ENCODE measurements at regions of chr17 and their contacts with region 1.

Region 1: DNA sequence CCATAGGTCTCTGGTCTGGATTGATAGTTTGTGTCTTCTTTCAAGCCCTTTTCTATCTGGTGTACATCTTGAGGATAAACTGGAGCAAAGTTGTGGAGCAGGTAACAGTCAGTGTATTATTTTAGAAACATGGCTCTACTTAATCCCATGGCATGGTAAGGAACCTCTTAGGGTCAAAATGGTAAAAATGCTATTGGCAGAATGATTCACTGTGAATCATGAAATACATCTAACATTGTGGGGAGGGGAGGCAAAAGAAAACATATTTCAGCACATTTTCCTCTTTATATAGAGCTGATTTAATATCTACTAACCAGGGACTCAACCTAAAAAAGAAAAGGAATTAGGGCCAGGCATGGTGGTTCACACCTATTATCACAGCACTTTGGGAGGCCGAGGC is 17.9 kb upstream of the ALDH3A2 start:
- DNase-seq: no peak
- H3K4me3 ChIP-seq: no peak overlapping the region
- H3K27ac ChIP-seq: no peak overlapping the region
- H3K4me1 ChIP-seq: no peaks in the 10 kb centered on the region
- H3K27me3 ChIP-seq: no peaks in the 10 kb centered on the region
- CTCF ChIP-seq: no peak
- EP300 ChIP-seq: no peak
- POLR2A ChIP-seq: no peak

Region 2: GRCh38 chr17:19513897-19514488 is 116.7 kb before region 1 on chr17:
- in situ Hi-C with region 1: loop called in 2 of 4 experiments (anchors 10 to 25 kb)
- intact Hi-C with region 1: no loop called
- DNase-seq: peak; percentile 75
- H3K4me3 ChIP-seq: no peak overlapping the region
- H3K27ac ChIP-seq: peak overlapping the region in 2 of 4 donors; percentile 8 to 11
- H3K4me1 ChIP-seq: no peaks in the 10 kb centered on the region
- H3K27me3 ChIP-seq: no peaks in the 10 kb centered on the region
- CTCF ChIP-seq: peak; percentile 83 to 93 (median 89)
- EP300 ChIP-seq: no peak
- POLR2A ChIP-seq: no peak

Region 3: GRCh38 chr17:19686400-19687090 is 55.9 kb after region 1 on chr17:
- in situ Hi-C with region 1: no loop called
- intact Hi-C with region 1: no loop called
- DNase-seq: no peak
- H3K4me3 ChIP-seq: no peak overlapping the region
- H3K27ac ChIP-seq: no peak overlapping the region
- H3K4me1 ChIP-seq: no peaks in the 10 kb centered on the region
- H3K27me3 ChIP-seq: no peaks in the 10 kb centered on the region
- CTCF ChIP-seq: no peak
- EP300 ChIP-seq: no peak
- POLR2A ChIP-seq: no peak

Measured in transverse colon (tissue), 4 donors.